Aorta (tissue), 5 donors: ENCODE measurements at regions of chr12 and their contacts with region 1.

Region 1: DNA sequence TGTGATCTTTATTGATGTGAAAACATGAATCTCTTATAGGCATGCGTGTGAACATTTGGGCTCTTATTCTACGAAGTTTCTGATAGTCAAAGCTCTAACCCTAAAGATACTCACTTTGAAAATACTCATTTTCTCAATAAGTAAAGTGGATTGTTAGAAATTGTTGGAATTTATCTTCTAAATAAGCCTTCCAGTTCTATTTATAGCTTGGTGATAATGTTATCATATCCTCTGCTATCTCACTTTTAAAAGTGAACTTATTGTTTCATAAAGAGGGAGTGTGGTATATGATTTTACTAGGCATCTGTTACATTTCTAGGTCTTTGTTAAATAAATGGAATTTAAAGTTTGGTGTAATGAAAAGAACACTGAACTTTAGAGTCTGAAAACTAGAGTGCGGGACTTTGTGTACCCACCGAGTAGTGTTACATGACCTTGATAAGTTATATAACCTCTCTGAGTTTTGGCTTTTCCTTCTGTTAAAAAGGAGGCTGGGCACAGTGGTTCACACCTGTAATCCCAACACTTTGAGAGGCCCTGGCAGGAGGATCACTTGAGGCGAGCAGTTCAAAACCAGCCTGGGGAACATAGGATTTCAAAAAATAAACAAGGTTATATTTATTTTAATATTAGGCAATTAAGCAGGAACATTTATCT is 13.6 kb downstream of the USP15 start:
- DNase-seq: no peak
- ATAC-seq: no peak
- H3K4me3 ChIP-seq: no peak overlapping the region
- H3K27ac ChIP-seq: no peak overlapping the region
- H3K4me1 ChIP-seq: peaks cover 3 to 10% of the 10 kb centered on the region in 2 donors
- H3K27me3 ChIP-seq: no peaks in the 10 kb centered on the region

Region 2: DNA sequence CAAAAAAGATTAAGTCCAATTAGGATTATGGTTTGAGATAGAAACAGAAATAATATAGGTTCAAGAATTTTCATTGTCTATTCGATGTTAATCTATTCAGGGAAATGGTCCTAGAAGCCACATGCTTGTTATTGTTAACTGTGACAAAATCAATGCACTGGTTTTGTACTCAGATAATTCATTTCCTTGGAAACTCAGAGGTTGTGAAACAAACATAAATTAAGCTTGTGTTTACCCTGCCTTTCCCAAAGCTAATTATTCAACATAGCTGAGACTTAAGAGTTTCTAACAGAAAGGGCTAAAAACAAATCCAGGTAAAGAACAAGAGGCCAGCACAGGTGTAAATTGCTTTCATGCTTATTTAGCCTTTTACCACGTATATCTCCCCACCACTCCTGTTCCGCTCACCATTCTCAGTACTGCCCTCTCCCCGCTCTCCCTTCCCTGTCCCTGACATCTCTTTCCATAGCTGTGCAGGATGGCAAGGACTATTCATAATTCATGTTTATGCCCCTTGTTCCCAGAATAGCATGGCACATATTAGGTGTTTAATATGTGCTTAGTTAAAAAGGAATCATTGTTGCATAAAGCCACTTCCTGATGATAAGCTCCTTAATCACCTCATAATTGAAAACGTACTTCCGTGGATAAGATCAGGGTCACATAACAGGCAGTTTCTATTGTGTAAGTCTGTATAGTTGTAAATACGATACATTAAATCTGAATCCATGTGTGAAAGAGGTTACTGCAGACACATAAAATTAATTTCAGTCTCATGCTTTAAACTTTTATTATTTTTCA is 145.5 kb before region 1 on chr12:
- intact Hi-C with region 1: no loop called
- DNase-seq: no peak
- ATAC-seq: no peak
- H3K4me3 ChIP-seq: no peak overlapping the region
- H3K27ac ChIP-seq: no peak overlapping the region
- H3K4me1 ChIP-seq: no peaks in the 10 kb centered on the region
- H3K27me3 ChIP-seq: no peaks in the 10 kb centered on the region

Region 3: DNA sequence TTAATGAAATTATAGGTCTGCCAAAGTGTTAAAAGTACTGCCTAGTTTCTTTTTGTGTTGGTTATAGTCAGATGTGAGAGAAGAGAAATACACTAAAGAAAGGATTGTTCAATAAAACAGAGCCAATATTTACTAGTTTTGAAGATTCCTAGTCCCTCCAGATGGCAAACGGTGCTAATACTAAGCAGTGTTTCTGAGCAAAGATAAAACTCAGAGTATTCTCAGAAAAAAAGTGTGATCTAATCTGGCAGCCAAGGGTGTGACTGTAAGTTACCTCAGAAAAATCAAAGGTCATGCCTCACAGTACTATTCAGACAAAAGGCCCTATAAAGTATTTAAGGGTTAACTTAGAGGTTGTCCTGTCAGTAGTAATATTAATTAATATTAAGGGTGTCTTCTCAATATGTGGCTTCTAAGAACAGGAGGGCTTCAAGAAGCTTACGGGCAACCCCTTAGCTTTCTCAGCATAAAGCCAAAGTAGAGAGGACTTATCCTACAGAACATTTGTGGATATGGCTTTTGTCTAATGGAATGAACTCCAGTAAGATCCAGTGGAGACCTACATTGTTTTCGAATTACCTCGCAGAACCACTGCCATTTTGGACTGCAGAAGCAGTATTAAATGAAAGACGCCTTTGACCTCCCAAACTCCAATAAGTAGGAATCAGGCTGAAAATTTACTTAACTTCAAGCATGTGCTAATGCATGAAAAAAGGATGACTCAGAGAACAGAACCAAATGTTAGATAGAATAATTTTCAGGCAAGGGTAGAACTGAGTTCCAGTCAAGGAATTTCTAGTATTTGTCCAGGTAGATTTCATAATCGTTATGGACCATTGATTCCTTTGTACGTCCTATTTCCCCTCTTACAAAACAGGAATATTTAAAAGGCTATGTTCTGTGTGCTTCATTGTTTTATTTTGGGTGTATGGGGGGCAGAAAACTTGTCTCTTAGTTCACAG is 33.0 kb after region 1 on chr12:
- intact Hi-C with region 1: loop called in 1 of 2 experiments (anchors 5 kb)
- DNase-seq: no peak
- ATAC-seq: no peak
- H3K4me3 ChIP-seq: no peak overlapping the region
- H3K27ac ChIP-seq: no peak overlapping the region
- H3K4me1 ChIP-seq: no peaks in the 10 kb centered on the region
- H3K27me3 ChIP-seq: no peaks in the 10 kb centered on the region

Region 4: GRCh38 chr12:62317017-62317416 is 43.2 kb after region 1 on chr12:
- intact Hi-C with region 1: no loop called
- DNase-seq: no peak
- ATAC-seq: no peak
- H3K4me3 ChIP-seq: no peak overlapping the region
- H3K27ac ChIP-seq: no peak overlapping the region
- H3K4me1 ChIP-seq: peaks cover 0 to 2% of the 10 kb centered on the region in 2 donors
- H3K27me3 ChIP-seq: no peaks in the 10 kb centered on the region

Region 5: GRCh38 chr12:62458626-62459025 is 184.8 kb after region 1 on chr12:
- intact Hi-C with region 1: no loop called
- DNase-seq: no peak
- ATAC-seq: no peak
- H3K4me3 ChIP-seq: no peak overlapping the region
- H3K27ac ChIP-seq: no peak overlapping the region
- H3K4me1 ChIP-seq: no peaks in the 10 kb centered on the region
- H3K27me3 ChIP-seq: no peaks in the 10 kb centered on the region